B cell (primary cell): ENCODE measurements at regions of chr22 and their contacts with region 1.

Region 1: GRCh38 chr22:22060200-22061084 is 77.9 kb upstream of the TOP3B start:
- DNase-seq: peak; percentile 75
- ATAC-seq: peak; percentile 68
- H3K4me3 ChIP-seq: no peak overlapping the region
- H3K4me3 Mint-ChIP-seq: no peak overlapping the region
- H3K27ac ChIP-seq: no peak overlapping the region
- H3K27ac Mint-ChIP-seq: peak overlapping the region; percentile 73
- H3K4me1 ChIP-seq: peaks cover 33 to 36% of the 10 kb centered on the region in 2 donors
- H3K4me1 Mint-ChIP-seq: peaks cover 37% of the 10 kb centered on the region
- H3K27me3 ChIP-seq: no peaks in the 10 kb centered on the region
- H3K27me3 Mint-ChIP-seq: peaks cover 3% of the 10 kb centered on the region
- CTCF ChIP-seq: peak; percentile 86

Region 2: DNA sequence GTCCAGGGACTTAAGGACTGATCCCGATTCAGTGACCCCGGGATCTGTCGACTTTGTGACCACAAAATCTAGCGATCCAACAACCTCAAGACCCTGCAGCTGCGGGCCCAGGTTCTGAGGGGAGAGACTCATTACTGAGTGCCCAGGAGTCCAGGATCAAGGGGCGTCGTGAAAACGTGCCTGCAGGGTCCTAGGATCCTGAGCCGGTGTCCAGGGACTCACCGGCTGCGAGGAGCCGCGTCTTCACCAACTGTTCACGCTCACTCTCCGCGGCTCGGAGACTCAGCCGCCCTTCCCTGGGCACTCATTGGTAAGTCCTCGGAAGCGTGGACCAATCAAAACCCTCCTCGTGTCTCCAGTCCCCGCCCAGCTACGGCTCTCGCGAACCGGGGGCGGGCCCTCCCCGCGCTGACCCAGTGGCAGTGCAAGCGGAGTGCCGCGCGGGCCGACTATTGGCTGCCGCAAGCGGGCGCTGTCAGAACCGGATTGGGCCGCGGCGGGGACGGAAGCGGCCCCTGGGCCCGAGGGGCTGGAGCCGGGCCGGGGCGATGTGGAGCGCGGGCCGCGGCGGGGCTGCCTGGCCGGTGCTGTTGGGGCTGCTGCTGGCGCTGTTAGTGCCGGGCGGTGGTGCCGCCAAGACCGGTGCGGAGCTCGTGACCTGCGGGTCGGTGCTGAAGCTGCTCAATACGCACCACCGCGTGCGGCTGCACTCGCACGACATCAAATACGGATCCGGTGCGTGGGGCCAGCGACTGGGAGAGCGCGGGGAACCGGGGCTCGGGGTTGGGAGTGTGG is 418.5 kb before region 1 on chr22 and contains the start of gene SDF2L1:
- CTCF ChIA-PET with region 1: no interaction called
- POLR2A ChIA-PET with region 1: no interaction called
- intact Hi-C with region 1: no loop called
- DNase-seq: peak; percentile 98
- ATAC-seq: peak; percentile 96
- H3K4me3 ChIP-seq: peak within 1 kb of the TSS; percentile 50 to 93 (median 75)
- H3K4me3 Mint-ChIP-seq: peak within 1 kb of the TSS; percentile 82
- H3K27ac ChIP-seq: peak within 1 kb of the TSS; percentile 41 to 84
- H3K27ac Mint-ChIP-seq: peak within 1 kb of the TSS; percentile 78
- H3K4me1 ChIP-seq: peaks cover 12 to 27% of the 10 kb centered on the region in 2 donors
- H3K4me1 Mint-ChIP-seq: peaks cover 26% of the 10 kb centered on the region
- H3K27me3 ChIP-seq: no peaks in the 10 kb centered on the region
- H3K27me3 Mint-ChIP-seq: no peaks in the 10 kb centered on the region
- CTCF ChIP-seq: no peak
- total RNA-seq, gene SDF2L1: 10.6 and 15.2 TPM in 2 replicates

Region 3: DNA sequence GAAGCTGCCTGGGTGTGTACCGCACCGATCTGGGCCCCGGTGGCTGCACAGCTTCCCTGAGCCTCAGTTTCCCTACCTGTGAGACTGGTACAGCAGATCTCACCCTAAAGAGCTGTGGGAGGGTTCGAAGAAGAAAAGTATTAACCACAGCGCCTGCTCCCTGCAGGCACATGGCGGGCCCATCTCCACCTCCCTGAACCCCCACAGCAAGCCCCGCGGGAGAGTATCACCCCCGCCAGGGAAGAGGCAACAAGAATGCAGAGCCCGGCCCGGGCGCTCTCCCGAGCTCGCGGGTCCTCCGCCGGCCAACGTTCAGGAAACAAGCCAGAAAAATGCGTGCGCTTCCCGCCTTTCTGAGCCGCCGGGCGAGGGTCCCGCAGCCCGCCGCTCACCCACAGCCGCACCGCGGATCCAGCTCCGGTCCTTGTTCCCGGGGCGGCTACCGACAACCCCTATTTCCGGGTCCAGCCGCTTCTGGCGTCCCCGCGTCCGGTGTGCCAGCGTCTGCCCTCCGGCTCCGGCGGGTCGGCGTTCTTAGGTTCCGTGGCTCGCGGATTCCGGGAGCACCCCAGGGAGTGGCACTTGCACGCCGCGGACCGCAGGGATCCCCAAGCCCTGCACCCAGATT is 78.0 kb before region 1 on chr22 and contains the start of gene TOP3B:
- CTCF ChIA-PET with region 1: interaction called, 10 read pairs
- POLR2A ChIA-PET with region 1: no interaction called
- intact Hi-C with region 1: no loop called
- DNase-seq: peak; percentile 85
- ATAC-seq: peak; percentile 94
- H3K4me3 ChIP-seq: peak within 1 kb of the TSS; percentile 45 to 94 (median 89)
- H3K4me3 Mint-ChIP-seq: peak within 1 kb of the TSS; percentile 91
- H3K27ac ChIP-seq: peak within 1 kb of the TSS; percentile 55 to 87
- H3K27ac Mint-ChIP-seq: peak within 1 kb of the TSS; percentile 94
- H3K4me1 ChIP-seq: peaks cover 14 to 18% of the 10 kb centered on the region in 2 donors
- H3K4me1 Mint-ChIP-seq: peaks cover 40% of the 10 kb centered on the region
- H3K27me3 ChIP-seq: no peaks in the 10 kb centered on the region
- H3K27me3 Mint-ChIP-seq: no peaks in the 10 kb centered on the region
- CTCF ChIP-seq: no peak
- total RNA-seq, gene TOP3B: 103 and 105 TPM in 2 replicates

Region 4: DNA sequence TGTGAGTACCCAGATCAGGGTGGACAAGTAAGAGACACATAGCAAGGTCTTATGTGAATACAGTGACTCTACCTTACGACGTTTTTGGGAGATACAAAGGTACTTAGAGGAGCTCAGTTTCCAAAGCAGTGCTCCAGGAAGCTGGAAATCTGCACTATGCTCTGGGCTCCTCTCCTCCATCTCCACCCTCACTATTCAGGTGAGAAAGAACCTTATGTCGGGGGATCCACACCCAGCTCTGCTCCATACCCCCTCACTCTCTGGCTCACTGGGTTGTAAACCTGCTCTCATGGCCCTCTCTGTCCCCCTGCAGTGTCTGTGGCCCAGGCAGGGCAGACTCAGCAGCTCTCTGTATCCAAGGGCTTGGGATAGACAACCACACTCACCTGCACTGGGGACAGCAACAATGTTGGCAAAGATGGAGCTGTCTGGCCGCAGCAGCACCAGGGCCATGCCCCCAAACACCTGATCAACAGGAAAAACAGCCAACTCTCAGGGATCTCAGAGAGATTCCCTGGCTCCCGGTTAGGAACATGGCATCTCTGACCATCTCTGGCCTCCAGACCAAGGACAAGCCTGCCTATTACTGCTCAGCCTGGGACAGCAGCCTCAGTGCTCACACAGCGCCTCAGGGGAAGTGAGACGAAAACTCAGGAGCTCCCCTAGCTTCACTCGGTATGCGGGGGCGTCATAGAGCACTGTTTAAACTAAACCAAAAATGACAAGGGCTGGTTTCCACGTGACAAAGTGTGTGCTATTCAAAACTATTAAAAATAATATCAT is 17.0 kb before region 1 on chr22:
- CTCF ChIA-PET with region 1: interaction called, 33 read pairs
- POLR2A ChIA-PET with region 1: interaction called, 4 read pairs
- intact Hi-C with region 1: loop called (anchors 2 kb)
- DNase-seq: peak; percentile 42
- ATAC-seq: peak; percentile 70
- H3K4me3 ChIP-seq: peak overlapping the region in 2 of 5 experiments; percentile 48 to 54
- H3K4me3 Mint-ChIP-seq: peak overlapping the region; percentile 67
- H3K27ac ChIP-seq: no peak overlapping the region
- H3K27ac Mint-ChIP-seq: peak overlapping the region; percentile 85
- H3K4me1 ChIP-seq: peaks cover 38 to 54% of the 10 kb centered on the region in 2 donors
- H3K4me1 Mint-ChIP-seq: peaks cover 75% of the 10 kb centered on the region
- H3K27me3 ChIP-seq: no peaks in the 10 kb centered on the region
- H3K27me3 Mint-ChIP-seq: no peaks in the 10 kb centered on the region
- CTCF ChIP-seq: no peak

Region 5: DNA sequence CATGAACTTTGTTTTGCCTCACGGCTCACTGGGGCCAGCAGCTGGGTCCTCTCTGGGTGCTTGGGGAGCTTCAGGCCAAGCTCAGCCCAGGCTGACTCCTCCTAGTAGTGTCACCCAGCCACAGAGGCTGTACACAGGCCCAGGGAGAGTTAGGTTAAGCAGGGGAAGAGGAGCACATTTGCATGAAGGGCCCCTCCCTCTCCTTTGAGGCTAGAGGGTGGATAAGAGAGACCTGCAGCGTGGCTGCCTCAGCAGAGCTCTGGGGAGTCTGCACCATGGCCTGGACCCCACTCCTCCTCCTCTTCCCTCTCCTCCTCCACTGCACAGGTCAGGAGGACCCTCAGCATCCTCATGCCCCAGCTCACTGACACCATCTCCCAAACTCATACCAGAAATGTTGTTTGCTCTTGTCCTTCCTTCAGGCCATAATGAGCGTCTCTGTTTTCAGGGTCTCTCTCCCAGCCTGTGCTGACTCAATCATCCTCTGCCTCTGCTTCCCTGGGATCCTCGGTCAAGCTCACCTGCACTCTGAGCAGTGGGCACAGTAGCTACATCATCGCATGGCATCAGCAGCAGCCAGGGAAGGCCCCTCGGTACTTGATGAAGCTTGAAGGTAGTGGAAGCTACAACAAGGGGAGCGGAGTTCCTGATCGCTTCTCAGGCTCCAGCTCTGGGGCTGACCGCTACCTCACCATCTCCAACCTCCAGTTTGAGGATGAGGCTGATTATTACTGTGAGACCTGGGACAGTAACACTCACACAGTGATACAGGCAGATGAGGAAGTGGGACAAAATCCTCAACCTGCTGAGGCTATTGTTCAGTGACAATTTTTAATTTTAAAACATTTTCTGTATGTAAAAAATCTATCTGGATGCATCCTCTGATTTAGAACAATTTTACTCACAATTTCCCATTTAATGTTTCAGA is 101.7 kb after region 1 on chr22:
- CTCF ChIA-PET with region 1: interaction called, 13 read pairs
- POLR2A ChIA-PET with region 1: no interaction called
- intact Hi-C with region 1: no loop called
- DNase-seq: peak; percentile 80
- ATAC-seq: peak; percentile 95
- H3K4me3 ChIP-seq: peak overlapping the region in 4 of 5 experiments; percentile 14 to 70 (median 38)
- H3K4me3 Mint-ChIP-seq: peak overlapping the region; percentile 89
- H3K27ac ChIP-seq: peak overlapping the region; percentile 96 to 98
- H3K27ac Mint-ChIP-seq: peak overlapping the region; percentile 98
- H3K4me1 ChIP-seq: peaks cover 75 to 82% of the 10 kb centered on the region in 2 donors
- H3K4me1 Mint-ChIP-seq: peaks cover 85% of the 10 kb centered on the region
- H3K27me3 ChIP-seq: no peaks in the 10 kb centered on the region
- H3K27me3 Mint-ChIP-seq: no peaks in the 10 kb centered on the region
- CTCF ChIP-seq: no peak